ENCODE measurements at regions of chr3 and their contacts with region 1.

Region 1: GRCh38 chr3:75180235-75180944 is 483.7 kb upstream of the FRG2C start:
- DNase-seq: no peak
- H3K4me3 ChIP-seq: no peak overlapping the region
- H3K4me3 Mint-ChIP-seq: no peak overlapping the region
- H3K27ac ChIP-seq: no peak overlapping the region
- H3K27ac Mint-ChIP-seq: no peak overlapping the region
- H3K4me1 ChIP-seq: no peaks in the 10 kb centered on the region
- H3K4me1 Mint-ChIP-seq: no peaks in the 10 kb centered on the region
- H3K27me3 ChIP-seq: no peaks in the 10 kb centered on the region
- H3K27me3 Mint-ChIP-seq: peaks cover 2% of the 10 kb centered on the region in 2 donors

Region 2: GRCh38 chr3:75129101-75129500 is 51.3 kb before region 1 on chr3:
- CTCF ChIA-PET with region 1: no interaction called
- POLR2A ChIA-PET with region 1: no interaction called
- intact Hi-C with region 1: no loop called
- DNase-seq: no peak
- H3K4me3 ChIP-seq: no peak overlapping the region
- H3K4me3 Mint-ChIP-seq: no peak overlapping the region
- H3K27ac ChIP-seq: no peak overlapping the region
- H3K27ac Mint-ChIP-seq: no peak overlapping the region
- H3K4me1 ChIP-seq: no peaks in the 10 kb centered on the region
- H3K4me1 Mint-ChIP-seq: no peaks in the 10 kb centered on the region
- H3K27me3 ChIP-seq: no peaks in the 10 kb centered on the region
- H3K27me3 Mint-ChIP-seq: no peaks in the 10 kb centered on the region

Region 3: DNA sequence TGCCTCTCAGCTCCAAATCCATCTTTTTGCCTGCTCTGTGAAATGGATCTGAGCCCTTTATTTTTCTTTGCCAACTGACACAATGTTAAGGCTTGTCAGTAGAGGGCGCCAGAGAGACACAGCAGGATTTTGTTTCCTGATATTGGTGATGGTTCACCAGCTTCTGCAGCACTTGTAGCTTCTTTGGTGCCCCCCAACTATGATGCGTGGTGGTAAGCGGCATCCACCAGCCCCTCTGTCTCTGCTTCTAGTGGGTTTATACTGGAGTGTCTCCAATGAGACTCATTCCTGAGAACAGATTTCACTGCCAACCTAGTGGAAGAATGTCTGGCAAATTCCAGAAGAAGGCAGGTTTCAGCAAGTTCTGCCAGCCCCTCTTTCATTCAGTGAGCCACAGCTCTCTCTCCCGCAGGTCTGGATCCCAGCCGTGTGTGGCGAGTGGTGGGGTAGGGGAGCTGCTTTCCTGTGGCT is 11.8 kb after region 1 on chr3:
- CTCF ChIA-PET with region 1: interaction called, 11 read pairs
- POLR2A ChIA-PET with region 1: no interaction called
- intact Hi-C with region 1: no loop called
- DNase-seq: peak in 4 of 5 donors; percentile 25 to 43 (median 28)
- H3K4me3 ChIP-seq: no peak overlapping the region
- H3K4me3 Mint-ChIP-seq: no peak overlapping the region
- H3K27ac ChIP-seq: no peak overlapping the region
- H3K27ac Mint-ChIP-seq: no peak overlapping the region
- H3K4me1 ChIP-seq: no peaks in the 10 kb centered on the region
- H3K4me1 Mint-ChIP-seq: no peaks in the 10 kb centered on the region
- H3K27me3 ChIP-seq: no peaks in the 10 kb centered on the region
- H3K27me3 Mint-ChIP-seq: peaks cover 0 to 2% of the 10 kb centered on the region in 2 donors

Region 4: GRCh38 chr3:75218577-75218976 is 38.2 kb after region 1 on chr3:
- CTCF ChIA-PET with region 1: no interaction called
- POLR2A ChIA-PET with region 1: no interaction called
- intact Hi-C with region 1: no loop called
- DNase-seq: no peak
- H3K4me3 ChIP-seq: no peak overlapping the region
- H3K4me3 Mint-ChIP-seq: no peak overlapping the region
- H3K27ac ChIP-seq: no peak overlapping the region
- H3K27ac Mint-ChIP-seq: no peak overlapping the region
- H3K4me1 ChIP-seq: no peaks in the 10 kb centered on the region
- H3K4me1 Mint-ChIP-seq: no peaks in the 10 kb centered on the region
- H3K27me3 ChIP-seq: no peaks in the 10 kb centered on the region
- H3K27me3 Mint-ChIP-seq: peaks cover 2 to 5% of the 10 kb centered on the region in 2 donors

Region 5: GRCh38 chr3:75254685-75255084 is 74.3 kb after region 1 on chr3:
- CTCF ChIA-PET with region 1: no interaction called
- POLR2A ChIA-PET with region 1: no interaction called
- intact Hi-C with region 1: no loop called
- DNase-seq: no peak
- H3K4me3 ChIP-seq: no peak overlapping the region
- H3K4me3 Mint-ChIP-seq: no peak overlapping the region
- H3K27ac ChIP-seq: no peak overlapping the region
- H3K27ac Mint-ChIP-seq: no peak overlapping the region
- H3K4me1 ChIP-seq: no peaks in the 10 kb centered on the region
- H3K4me1 Mint-ChIP-seq: no peaks in the 10 kb centered on the region
- H3K27me3 ChIP-seq: no peaks in the 10 kb centered on the region
- H3K27me3 Mint-ChIP-seq: peaks cover 0 to 4% of the 10 kb centered on the region in 2 donors

Region 6: DNA sequence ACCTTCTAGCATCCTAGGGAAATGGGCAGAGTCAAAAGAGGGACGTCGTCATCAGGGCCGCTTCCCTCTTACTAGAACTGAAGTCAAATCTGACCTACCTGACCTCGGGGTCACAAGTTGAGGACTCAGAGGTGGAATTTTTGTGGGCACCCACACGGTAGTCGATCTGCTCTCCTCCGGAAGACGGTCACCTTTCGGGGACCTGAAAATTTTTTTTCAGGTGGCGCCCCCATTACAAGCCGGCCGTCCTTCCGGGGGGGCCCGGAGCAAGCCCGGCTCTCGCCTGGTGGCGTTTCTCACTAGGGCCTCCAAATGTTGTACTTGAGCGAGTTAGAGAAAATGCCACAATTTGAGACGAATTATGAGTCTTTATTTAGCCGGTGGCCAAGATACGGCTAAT is 326.2 kb after region 1 on chr3:
- CTCF ChIA-PET with region 1: no interaction called
- POLR2A ChIA-PET with region 1: no interaction called
- intact Hi-C with region 1: no loop called
- DNase-seq: peak in 1 of 5 donors; percentile 22
- H3K4me3 ChIP-seq: no peak overlapping the region
- H3K4me3 Mint-ChIP-seq: no peak overlapping the region
- H3K27ac ChIP-seq: no peak overlapping the region
- H3K27ac Mint-ChIP-seq: no peak overlapping the region
- H3K4me1 ChIP-seq: no peaks in the 10 kb centered on the region
- H3K4me1 Mint-ChIP-seq: no peaks in the 10 kb centered on the region
- H3K27me3 ChIP-seq: no peaks in the 10 kb centered on the region
- H3K27me3 Mint-ChIP-seq: no peaks in the 10 kb centered on the region

Measured in CD4-positive, alpha-beta memory T cell (primary cell).